CD8-positive, alpha-beta T cell (primary cell): ENCODE measurements at regions of chr15 and their contacts with region 1.

Region 1: GRCh38 chr15:52481915-52482314 is 46.8 kb downstream of the MYO5A start:
- DNase-seq: peak; percentile 24 to 91 (median 53)
- ATAC-seq: peak; percentile 98
- H3K4me3 ChIP-seq: peak overlapping the region in 1 of 2 experiments; percentile 14
- H3K4me3 Mint-ChIP-seq: peak overlapping the region; percentile 27
- H3K27ac ChIP-seq: peak overlapping the region; percentile 15 to 79
- H3K27ac Mint-ChIP-seq: peak overlapping the region; percentile 81
- H3K4me1 ChIP-seq: peaks cover 26% of the 10 kb centered on the region
- H3K4me1 Mint-ChIP-seq: peaks cover 66% of the 10 kb centered on the region
- H3K27me3 ChIP-seq: no peaks in the 10 kb centered on the region
- H3K27me3 Mint-ChIP-seq: no peaks in the 10 kb centered on the region
- CTCF ChIP-seq: no peak

Region 2: GRCh38 chr15:52039925-52040781 is 441.8 kb before region 1 on chr15:
- CTCF ChIA-PET with region 1: no interaction called
- POLR2A ChIA-PET with region 1: no interaction called
- intact Hi-C with region 1: loop called in 1 of 2 experiments (anchors 10 kb)
- DNase-seq: no peak
- ATAC-seq: no peak
- H3K4me3 ChIP-seq: no peak overlapping the region
- H3K4me3 Mint-ChIP-seq: no peak overlapping the region
- H3K27ac ChIP-seq: peak overlapping the region in 1 of 2 experiments; percentile 24
- H3K27ac Mint-ChIP-seq: peak overlapping the region; percentile 69
- H3K4me1 ChIP-seq: peaks cover 31% of the 10 kb centered on the region
- H3K4me1 Mint-ChIP-seq: peaks cover 65% of the 10 kb centered on the region
- H3K27me3 ChIP-seq: no peaks in the 10 kb centered on the region
- H3K27me3 Mint-ChIP-seq: no peaks in the 10 kb centered on the region
- CTCF ChIP-seq: no peak

Region 3: DNA sequence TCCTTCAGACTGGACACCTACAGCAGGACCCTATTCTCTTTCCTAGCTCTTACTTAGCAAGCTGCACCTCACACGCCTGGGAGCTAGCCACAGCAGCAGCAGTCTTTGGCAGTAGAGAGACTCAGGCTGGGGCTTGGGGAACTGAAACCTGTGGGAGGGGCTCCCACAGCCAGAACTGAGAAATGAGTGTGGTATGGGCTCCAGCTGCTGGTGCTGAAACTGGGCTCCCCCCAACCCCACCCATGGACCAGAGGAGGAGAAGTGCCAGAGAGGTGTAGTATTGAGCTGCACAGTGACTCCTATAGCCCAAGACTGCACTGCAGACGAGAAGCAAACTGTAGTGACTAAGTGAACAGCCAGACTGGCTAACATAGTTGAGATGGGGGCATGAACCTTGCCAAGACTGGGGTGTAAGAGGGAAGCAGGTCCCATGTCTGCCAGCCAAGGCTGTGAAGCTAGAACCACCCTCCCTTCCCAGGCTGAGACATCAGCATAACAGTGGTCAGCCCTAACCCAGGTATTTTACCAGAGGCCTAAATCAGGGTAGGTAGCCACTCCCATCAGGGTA is 15.7 kb before region 1 on chr15:
- CTCF ChIA-PET with region 1: no interaction called
- POLR2A ChIA-PET with region 1: interaction called, 6 read pairs
- intact Hi-C with region 1: loop called in 1 of 2 experiments (anchors 2 kb)
- DNase-seq: peak in 3 of 9 experiments; percentile 31 to 56 (median 34)
- ATAC-seq: peak; percentile 58
- H3K4me3 ChIP-seq: no peak overlapping the region
- H3K4me3 Mint-ChIP-seq: no peak overlapping the region
- H3K27ac ChIP-seq: peak overlapping the region in 1 of 2 experiments; percentile 83
- H3K27ac Mint-ChIP-seq: peak overlapping the region; percentile 52
- H3K4me1 ChIP-seq: peaks cover 10% of the 10 kb centered on the region
- H3K4me1 Mint-ChIP-seq: peaks cover 39% of the 10 kb centered on the region
- H3K27me3 ChIP-seq: no peaks in the 10 kb centered on the region
- H3K27me3 Mint-ChIP-seq: no peaks in the 10 kb centered on the region
- CTCF ChIP-seq: no peak

Region 4: DNA sequence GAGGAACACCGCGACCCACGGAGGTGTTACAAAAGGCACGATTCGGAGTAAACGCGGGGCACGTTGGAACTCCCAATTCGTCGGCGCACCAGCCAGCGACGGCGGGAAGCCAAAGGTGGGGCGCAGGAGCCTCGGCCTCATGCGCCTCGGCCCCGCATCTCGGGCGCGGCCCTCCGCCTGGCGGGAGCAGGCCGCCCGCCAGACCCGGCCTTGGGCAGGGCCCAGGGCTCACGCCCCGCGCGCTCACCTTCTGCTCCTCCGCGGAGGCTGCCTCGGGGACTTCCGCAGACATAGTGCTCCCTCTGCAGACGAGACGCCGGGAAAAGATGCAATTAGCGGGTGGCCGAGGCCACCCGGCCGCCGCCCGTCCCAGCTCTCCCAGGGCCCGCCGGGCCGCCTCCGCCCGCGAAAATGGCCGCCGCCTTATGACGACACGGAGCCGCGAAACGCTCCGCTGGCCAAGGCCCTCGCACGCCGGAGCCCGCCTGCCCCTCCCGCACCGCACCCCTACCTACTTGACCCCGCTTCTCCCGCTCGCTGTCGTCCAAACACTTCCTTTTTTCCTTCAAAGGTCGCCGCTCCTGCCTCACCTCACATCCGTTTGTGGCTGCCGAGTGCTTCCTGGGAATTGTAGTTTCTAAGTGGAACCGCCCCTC is 86.8 kb after region 1 on chr15 and contains the start of gene ARPP19:
- CTCF ChIA-PET with region 1: no interaction called
- POLR2A ChIA-PET with region 1: no interaction called
- intact Hi-C with region 1: loop called (anchors 2 to 5 kb)
- DNase-seq: peak; percentile 56 to 90 (median 77)
- ATAC-seq: peak; percentile 72
- H3K4me3 ChIP-seq: peak within 1 kb of the TSS; percentile 66 to 74
- H3K4me3 Mint-ChIP-seq: peak within 1 kb of the TSS; percentile 94
- H3K27ac ChIP-seq: peak within 1 kb of the TSS; percentile 93 to 95
- H3K27ac Mint-ChIP-seq: peak within 1 kb of the TSS; percentile 99
- H3K4me1 ChIP-seq: peaks cover 29% of the 10 kb centered on the region
- H3K4me1 Mint-ChIP-seq: peaks cover 40% of the 10 kb centered on the region
- H3K27me3 ChIP-seq: no peaks in the 10 kb centered on the region
- H3K27me3 Mint-ChIP-seq: no peaks in the 10 kb centered on the region
- CTCF ChIP-seq: no peak
- total RNA-seq, gene ARPP19: 141 to 156 TPM